Activated T-helper 1 cell treated with anti-CD3 and anti-CD28 coated beads, Interleukin-12 subunit alpha, Interleukin-12 subunit beta, Interleukin-2, Interleukin-4 antibody, amounts not matched to agents 30 ng/mL and 10 ng/mL and 1 ng/mL, durations not matched to agents 14 hours and 24 hours and 36 hours (primary cell): ENCODE measurements at regions of chr10 and their contacts with region 1.

Region 1: GRCh38 chr10:95864906-95865813 is 42.6 kb upstream of the CC2D2B start:
- DNase-seq: peak; percentile 57
- H3K4me3 Mint-ChIP-seq: peak overlapping the region; percentile 10
- H3K27ac Mint-ChIP-seq: peak overlapping the region; percentile 62
- H3K4me1 Mint-ChIP-seq: peaks cover 44% of the 10 kb centered on the region
- H3K27me3 Mint-ChIP-seq: no peaks in the 10 kb centered on the region

Region 2: DNA sequence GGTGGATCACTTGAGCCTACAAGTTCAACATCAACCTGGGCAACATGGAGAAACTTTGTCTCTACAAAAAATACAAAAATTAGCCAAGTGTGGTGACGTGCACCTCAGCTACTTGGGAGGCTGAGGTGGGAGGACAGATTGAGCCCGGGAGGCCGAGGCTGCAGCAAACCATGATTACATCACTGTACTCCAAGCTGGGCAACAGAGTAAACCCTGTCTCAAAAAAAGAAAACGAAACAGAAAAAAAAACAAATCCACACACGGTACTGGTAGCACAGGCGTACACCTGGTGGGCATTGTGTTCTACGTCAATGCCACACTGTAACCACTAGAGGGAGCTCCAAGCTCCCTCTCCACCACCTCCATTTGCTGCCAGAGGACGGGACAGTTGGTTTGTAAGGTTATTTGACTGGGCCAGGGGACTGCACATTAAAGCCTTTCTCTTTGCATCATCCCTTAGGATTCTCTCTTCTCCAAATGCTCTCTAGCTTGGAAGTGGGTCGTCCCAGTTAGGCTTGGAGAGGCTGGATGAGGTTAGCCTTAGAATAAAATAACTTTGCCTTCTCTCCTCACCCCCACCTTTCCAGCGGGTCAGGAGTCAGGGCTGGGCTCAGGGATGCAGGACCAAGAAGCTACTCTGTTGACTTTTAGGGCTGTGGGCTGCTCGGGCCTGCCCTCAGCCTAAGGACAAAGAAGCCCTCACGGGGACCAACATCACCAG is 434.8 kb before region 1 on chr10:
- intact Hi-C with region 1: loop called (anchors 1 kb)
- DNase-seq: peak; percentile 23
- H3K4me3 Mint-ChIP-seq: no peak overlapping the region
- H3K27ac Mint-ChIP-seq: no peak overlapping the region
- H3K4me1 Mint-ChIP-seq: no peaks in the 10 kb centered on the region
- H3K27me3 Mint-ChIP-seq: peaks cover 6% of the 10 kb centered on the region

Region 3: DNA sequence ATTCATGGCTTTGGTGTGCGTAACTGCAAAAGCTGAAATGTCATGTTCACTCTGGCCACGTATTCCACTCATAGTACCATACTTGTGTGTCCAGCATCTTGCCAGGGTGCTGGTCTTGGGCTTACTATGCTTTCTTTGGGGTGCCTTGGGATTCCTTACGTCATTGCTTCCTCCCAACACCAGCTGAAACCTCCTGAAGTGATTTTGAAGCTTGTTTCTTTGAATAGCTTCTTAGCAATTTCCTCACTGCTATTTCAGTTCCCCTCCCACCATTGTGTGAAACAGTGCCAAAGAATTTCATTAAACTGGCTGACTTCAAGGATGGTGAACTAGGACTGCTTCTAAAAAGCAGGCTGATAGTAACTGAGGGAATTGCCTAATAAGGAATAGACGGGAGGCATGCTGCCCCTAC is 72.3 kb before region 1 on chr10:
- intact Hi-C with region 1: loop called (anchors 1 kb)
- DNase-seq: no peak
- H3K4me3 Mint-ChIP-seq: no peak overlapping the region
- H3K27ac Mint-ChIP-seq: peak overlapping the region; percentile 95
- H3K4me1 Mint-ChIP-seq: peaks cover 88% of the 10 kb centered on the region
- H3K27me3 Mint-ChIP-seq: peaks cover under 1% of the 10 kb centered on the region

Region 4: DNA sequence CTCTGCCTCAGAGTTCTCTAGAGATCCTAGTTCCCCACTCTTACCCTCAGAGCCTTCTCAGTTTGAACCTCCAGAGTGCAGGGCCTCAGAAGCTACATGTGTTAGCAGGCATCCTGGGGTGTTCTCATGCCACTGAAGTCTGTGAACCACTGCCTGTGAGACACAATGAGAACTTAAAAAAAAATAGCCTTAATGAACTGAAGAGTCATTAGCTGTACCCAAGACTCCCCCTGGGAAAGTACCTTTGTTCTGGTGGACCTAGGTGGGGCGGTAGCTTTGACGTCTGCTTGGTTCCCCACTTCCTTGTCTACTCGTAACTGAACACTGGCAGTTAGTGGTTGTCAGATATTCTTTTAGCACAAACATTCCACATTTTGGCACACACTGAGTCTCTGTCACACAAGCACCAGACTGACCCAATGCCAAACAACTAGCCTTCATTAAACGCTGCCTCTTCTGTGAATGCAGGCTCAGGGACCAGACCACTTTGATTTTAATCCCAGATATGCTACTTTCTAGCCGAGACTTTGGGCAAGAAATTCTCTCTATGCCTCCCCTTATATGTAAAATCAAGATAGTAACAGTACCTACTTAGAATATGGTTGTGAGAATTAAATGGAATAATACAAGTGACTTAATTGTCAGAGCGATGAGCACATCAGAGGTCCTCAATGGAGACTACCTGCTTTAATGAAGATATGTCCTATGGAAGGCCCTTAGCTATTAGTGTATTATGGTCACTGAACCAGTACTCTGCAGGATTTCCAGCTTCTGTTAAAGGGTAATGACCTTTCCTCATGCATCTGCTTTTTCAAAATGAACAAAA is 32.7 kb before region 1 on chr10:
- intact Hi-C with region 1: loop called (anchors 1 kb)
- DNase-seq: peak; percentile 71
- H3K4me3 Mint-ChIP-seq: peak overlapping the region; percentile 86
- H3K27ac Mint-ChIP-seq: peak overlapping the region; percentile 100
- H3K4me1 Mint-ChIP-seq: peaks cover 73% of the 10 kb centered on the region
- H3K27me3 Mint-ChIP-seq: no peaks in the 10 kb centered on the region

Region 5: DNA sequence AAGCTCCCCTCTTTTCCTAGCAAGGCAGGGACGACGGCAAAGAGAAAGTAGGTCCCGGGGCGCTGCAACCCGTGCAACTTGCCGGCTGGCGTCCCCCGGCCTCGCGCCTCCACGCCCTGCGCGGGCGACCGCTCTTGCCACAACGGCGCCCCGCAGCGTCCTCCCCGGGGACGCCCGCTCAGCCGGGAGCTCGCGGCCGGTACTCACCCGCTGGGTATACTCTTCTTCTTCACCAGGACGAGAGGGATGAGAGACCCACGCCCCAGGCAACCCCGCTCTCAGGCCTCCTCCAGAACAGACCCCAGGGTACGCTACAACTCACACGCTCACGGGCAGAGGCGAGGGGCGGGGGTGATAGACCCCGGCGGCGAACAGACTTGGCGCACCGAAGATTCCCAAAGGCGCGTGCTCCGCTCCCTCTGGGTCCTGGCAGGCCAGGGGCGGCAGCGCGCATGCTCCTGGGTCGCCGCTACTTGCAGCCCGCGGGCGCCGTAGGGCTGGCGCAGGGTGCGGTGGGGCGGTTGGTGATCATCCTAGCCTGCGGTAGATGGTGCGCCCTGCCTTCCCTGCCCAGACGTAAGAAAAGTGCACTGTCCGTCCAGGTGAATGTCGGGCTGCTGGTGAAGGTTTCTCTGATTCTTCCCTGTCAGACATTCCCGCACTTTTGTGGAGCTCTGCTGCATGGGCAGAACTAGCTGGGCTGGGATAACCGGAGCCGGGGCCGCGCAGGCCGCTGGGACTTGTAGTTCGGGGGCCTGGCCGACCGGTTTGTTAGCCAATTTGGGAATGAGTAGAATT is 42.5 kb after region 1 on chr10 and contains the start of gene CC2D2B:
- intact Hi-C with region 1: loop called (anchors 1 kb)
- DNase-seq: peak; percentile 59
- H3K4me3 Mint-ChIP-seq: peak within 1 kb of the TSS; percentile 92
- H3K27ac Mint-ChIP-seq: peak within 1 kb of the TSS; percentile 91
- H3K4me1 Mint-ChIP-seq: peaks cover 16% of the 10 kb centered on the region
- H3K27me3 Mint-ChIP-seq: peaks cover 16% of the 10 kb centered on the region
- total RNA-seq, gene CC2D2B: 0.60 and 0.96 TPM in 2 replicates